ENCODE measurements at regions of chr1 and their contacts with region 1.

Region 1: DNA sequence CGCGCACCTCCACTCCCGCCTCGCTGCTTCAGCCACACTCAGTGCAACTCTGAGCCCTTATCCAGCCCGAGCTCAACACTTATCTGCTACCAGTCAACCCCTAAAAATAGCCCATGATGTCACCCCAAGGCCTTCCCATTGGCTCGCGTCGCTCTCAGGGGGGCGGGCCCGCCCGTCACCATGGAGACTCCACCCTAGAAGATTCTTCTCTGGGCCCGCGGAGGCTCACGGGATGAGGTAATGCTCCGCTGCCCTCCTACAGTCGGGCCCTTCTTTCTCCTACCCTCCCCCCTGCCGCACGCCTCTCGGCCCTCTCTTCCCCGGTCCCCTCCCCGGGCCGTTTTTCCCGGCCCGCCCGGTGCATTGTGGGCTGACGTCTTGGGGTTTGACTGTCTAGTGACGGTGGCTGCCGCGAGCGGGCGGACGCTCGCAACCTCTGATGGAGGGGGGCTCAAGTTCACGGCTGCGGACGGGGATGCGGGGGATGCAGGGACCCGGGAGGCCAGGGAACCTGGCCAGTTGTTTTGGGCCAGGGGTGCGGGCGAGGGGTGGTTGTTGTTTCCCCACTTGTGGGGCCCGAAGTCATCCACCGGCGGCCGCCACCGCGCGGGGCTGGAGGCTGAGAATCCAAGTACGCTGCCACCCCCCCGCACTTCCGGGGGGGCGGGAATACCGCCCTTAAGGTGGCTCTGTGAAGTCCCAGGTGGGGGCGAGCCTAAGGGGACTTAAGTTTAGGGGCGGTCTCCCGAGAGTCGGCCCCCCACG is at the start of gene JUN:
- DNase-seq: peak; percentile 99
- H3K4me3 Mint-ChIP-seq: peak within 1 kb of the TSS; percentile 87
- H3K27ac Mint-ChIP-seq: peak within 1 kb of the TSS; percentile 94
- H3K4me1 Mint-ChIP-seq: peaks cover 18% of the 10 kb centered on the region
- H3K27me3 Mint-ChIP-seq: peaks cover 3% of the 10 kb centered on the region
- total RNA-seq, gene JUN: 12.5 to 13.2 TPM

Region 2: DNA sequence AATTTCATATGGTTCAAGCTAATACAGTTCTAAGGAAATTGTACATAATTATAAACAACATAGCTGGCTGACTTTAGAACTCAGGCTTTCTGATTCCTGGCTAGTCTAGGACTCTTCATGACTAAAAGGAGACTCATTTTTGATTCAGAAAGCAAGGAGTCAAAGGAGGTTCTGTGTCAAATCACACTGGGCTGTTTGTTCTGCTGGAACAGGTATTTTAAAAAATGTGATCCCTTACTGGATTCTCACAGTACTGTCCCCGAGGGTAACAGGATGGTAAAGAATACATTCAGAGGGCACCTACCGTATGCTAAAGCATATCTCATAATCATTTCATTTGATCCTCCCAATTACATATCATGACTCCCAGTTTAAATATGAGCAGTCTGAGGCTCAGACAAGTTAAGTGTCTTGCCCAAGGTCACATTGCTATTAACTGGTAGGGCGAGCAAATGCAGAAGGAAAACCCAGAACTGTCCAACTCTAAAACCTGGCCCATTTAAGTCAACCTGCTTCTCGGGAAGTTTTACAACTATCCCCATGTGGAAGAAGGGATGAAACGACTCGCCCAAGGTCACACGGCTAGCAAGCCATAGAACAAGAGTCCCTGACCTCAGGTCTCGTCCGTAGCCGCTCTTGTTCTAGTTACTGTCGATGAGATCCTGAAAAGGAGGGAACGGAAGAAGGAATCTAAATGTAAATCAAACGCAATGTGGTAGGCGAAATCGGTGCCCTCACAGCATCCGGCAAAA is 85.0 kb before region 1 on chr1:
- CTCF ChIA-PET with region 1: interaction called, 3 read pairs
- POLR2A ChIA-PET with region 1: interaction called, 3 read pairs
- intact Hi-C with region 1: loop called (anchors 2 kb)
- DNase-seq: no peak
- H3K4me3 Mint-ChIP-seq: peak overlapping the region; percentile 95
- H3K27ac Mint-ChIP-seq: peak overlapping the region; percentile 92
- H3K4me1 Mint-ChIP-seq: peaks cover 15% of the 10 kb centered on the region
- H3K27me3 Mint-ChIP-seq: no peaks in the 10 kb centered on the region

Region 3: GRCh38 chr1:58903514-58904298 is 119.5 kb after region 1 on chr1:
- CTCF ChIA-PET with region 1: interaction called, 3 read pairs
- POLR2A ChIA-PET with region 1: interaction called, 7 read pairs
- intact Hi-C with region 1: loop called (anchors 1 kb)
- DNase-seq: peak; percentile 91
- H3K4me3 Mint-ChIP-seq: peak overlapping the region; percentile 69
- H3K27ac Mint-ChIP-seq: peak overlapping the region; percentile 75
- H3K4me1 Mint-ChIP-seq: peaks cover 10% of the 10 kb centered on the region
- H3K27me3 Mint-ChIP-seq: no peaks in the 10 kb centered on the region

Region 4: GRCh38 chr1:59020151-59020997 is 236.2 kb after region 1 on chr1:
- CTCF ChIA-PET with region 1: no interaction called
- POLR2A ChIA-PET with region 1: interaction called, 4 read pairs
- intact Hi-C with region 1: loop called (anchors 1 kb)
- DNase-seq: peak; percentile 67
- H3K4me3 Mint-ChIP-seq: peak overlapping the region; percentile 46
- H3K27ac Mint-ChIP-seq: peak overlapping the region; percentile 87
- H3K4me1 Mint-ChIP-seq: peaks cover 25% of the 10 kb centered on the region
- H3K27me3 Mint-ChIP-seq: no peaks in the 10 kb centered on the region

Region 5: DNA sequence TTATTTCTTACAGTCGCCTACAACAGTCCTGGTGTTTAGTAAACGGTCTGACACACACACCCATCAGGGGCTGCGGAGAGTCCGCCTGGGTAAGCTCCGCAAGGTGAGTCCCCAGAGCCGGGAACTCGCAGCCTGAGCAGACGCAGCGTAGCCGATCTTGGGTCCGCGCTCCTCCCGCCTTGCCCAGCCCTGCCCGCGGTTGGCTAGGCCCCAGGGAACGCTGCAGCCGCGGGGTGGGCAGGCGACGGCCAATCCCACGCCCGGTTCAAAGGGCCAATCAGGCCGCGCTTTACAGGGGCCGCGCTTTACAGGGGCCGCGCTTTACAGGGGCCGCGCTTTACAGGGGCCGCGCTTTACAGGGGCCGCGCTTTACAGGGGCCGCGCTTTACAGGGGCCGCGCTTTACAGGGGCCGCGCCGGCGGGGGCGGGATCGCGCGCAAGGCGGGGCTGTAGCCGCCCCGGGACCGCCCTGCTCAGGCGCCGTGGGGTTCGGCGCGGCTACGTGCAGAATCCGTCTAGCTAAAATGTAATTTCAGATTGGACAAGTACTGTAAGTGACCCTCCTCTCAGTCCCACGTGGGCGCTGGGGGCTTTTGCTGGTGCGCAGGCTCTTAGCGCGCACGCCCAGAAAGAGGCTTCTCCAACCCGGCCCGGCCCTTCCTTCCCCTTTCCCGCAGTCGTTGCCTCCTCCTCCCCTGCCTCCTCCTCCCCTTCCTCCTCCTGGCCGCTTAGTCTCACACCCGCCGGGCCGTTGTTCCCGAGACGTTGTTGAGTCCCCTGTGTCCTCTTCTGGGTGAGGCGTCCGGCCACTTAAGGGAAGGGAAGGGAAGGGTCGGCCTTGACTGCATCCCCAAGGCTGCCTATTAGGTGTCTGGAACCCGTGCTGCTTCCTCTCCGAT is 512.4 kb after region 1 on chr1 and contains the start of gene FGGY:
- CTCF ChIA-PET with region 1: interaction called, 3 read pairs
- POLR2A ChIA-PET with region 1: interaction called, 4 read pairs
- intact Hi-C with region 1: loop called (anchors 1 kb)
- DNase-seq: peak; percentile 90
- H3K4me3 Mint-ChIP-seq: peak within 1 kb of the TSS; percentile 79
- H3K27ac Mint-ChIP-seq: peak within 1 kb of the TSS; percentile 70
- H3K4me1 Mint-ChIP-seq: peaks cover 13% of the 10 kb centered on the region
- H3K27me3 Mint-ChIP-seq: no peaks in the 10 kb centered on the region
- total RNA-seq, gene FGGY: 10.2 TPM

Region 6: GRCh38 chr1:59699227-59699847 is 915.2 kb after region 1 on chr1:
- CTCF ChIA-PET with region 1: interaction called, 11 read pairs
- POLR2A ChIA-PET with region 1: no interaction called
- intact Hi-C with region 1: loop called (anchors 2 kb)
- DNase-seq: peak; percentile 13
- H3K4me3 Mint-ChIP-seq: no peak overlapping the region
- H3K27ac Mint-ChIP-seq: no peak overlapping the region
- H3K4me1 Mint-ChIP-seq: peaks cover 17% of the 10 kb centered on the region
- H3K27me3 Mint-ChIP-seq: no peaks in the 10 kb centered on the region

Measured in activated CD4-positive, alpha-beta memory T cell treated with anti-CD3 and anti-CD28 coated beads for 36 hours (primary cell).